ENCODE measurements at regions of chr16 and their contacts with region 1.

Region 1: GRCh38 chr16:84754353-84754856 is 54.6 kb downstream of the USP10 start:
- DNase-seq: peak in 1 of 3 donors; percentile 91
- ATAC-seq: peak; percentile 91
- H3K4me3 ChIP-seq: no peak overlapping the region
- H3K4me1 ChIP-seq: peaks cover 7% of the 10 kb centered on the region
- CTCF ChIP-seq: peak; percentile 69

Region 2: GRCh38 chr16:84952335-84953189 is 198.2 kb after region 1 on chr16:
- intact Hi-C with region 1: loop called in 1 of 2 experiments (anchors 5 kb)
- DNase-seq: peak in 2 of 3 donors; percentile 66 to 95
- ATAC-seq: peak; percentile 96
- H3K4me3 ChIP-seq: no peak overlapping the region
- H3K4me1 ChIP-seq: peaks cover 9% of the 10 kb centered on the region
- CTCF ChIP-seq: peak; percentile 73

Region 3: DNA sequence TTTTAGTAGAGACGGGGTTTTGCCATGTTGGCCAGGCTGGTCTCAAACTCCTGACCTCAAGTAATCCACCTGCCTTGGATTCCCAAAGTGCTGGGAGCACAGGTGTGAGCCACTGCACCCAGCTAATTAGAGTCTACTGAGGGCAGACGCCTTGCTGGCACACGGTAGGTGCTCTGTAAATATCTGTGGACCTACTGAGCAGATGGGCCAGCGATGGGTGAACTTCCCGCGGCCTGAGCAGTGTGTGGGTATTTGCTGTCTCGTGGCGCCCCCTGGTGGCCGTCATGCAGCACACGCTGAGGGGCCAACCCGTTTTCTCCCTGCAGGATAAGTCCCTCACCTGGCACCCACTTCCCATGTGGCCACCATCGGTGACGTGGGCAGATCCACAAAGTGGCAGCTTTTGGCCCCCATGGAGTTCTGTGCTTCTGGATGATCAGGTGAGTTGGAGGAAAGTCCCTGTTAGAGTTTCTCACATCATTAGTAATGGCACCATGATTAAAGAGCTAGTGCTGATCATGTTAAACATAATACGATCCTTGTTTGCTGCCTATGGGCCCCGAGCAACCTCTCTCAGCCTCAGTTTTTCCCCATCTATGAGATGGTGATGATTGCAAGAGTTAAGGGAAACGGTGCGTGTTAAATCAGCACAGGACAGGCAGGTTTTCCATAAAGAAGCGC is 216.2 kb after region 1 on chr16:
- intact Hi-C with region 1: loop called (anchors 5 kb)
- DNase-seq: peak; percentile 74 to 80 (median 79)
- ATAC-seq: peak; percentile 90
- H3K4me3 ChIP-seq: no peak overlapping the region
- H3K4me1 ChIP-seq: no peaks in the 10 kb centered on the region
- CTCF ChIP-seq: peak; percentile 78